CD8-positive, alpha-beta T cell (primary cell): ENCODE measurements at regions of chr15 and their contacts with region 1.

Region 1: GRCh38 chr15:50424066-50424890 is at the start of gene USP8:
- DNase-seq: peak; percentile 86 to 97 (median 92)
- ATAC-seq: peak; percentile 96
- H3K4me3 ChIP-seq: peak within 1 kb of the TSS; percentile 84 to 95
- H3K4me3 Mint-ChIP-seq: peak within 1 kb of the TSS; percentile 98
- H3K27ac ChIP-seq: peak within 1 kb of the TSS; percentile 91 to 96
- H3K27ac Mint-ChIP-seq: peak within 1 kb of the TSS; percentile 99
- H3K4me1 ChIP-seq: peaks cover 27% of the 10 kb centered on the region
- H3K4me1 Mint-ChIP-seq: peaks cover 42% of the 10 kb centered on the region
- H3K27me3 ChIP-seq: no peaks in the 10 kb centered on the region
- H3K27me3 Mint-ChIP-seq: no peaks in the 10 kb centered on the region
- CTCF ChIP-seq: no peak
- total RNA-seq, gene USP8: 59.5 to 61.5 TPM

Region 2: DNA sequence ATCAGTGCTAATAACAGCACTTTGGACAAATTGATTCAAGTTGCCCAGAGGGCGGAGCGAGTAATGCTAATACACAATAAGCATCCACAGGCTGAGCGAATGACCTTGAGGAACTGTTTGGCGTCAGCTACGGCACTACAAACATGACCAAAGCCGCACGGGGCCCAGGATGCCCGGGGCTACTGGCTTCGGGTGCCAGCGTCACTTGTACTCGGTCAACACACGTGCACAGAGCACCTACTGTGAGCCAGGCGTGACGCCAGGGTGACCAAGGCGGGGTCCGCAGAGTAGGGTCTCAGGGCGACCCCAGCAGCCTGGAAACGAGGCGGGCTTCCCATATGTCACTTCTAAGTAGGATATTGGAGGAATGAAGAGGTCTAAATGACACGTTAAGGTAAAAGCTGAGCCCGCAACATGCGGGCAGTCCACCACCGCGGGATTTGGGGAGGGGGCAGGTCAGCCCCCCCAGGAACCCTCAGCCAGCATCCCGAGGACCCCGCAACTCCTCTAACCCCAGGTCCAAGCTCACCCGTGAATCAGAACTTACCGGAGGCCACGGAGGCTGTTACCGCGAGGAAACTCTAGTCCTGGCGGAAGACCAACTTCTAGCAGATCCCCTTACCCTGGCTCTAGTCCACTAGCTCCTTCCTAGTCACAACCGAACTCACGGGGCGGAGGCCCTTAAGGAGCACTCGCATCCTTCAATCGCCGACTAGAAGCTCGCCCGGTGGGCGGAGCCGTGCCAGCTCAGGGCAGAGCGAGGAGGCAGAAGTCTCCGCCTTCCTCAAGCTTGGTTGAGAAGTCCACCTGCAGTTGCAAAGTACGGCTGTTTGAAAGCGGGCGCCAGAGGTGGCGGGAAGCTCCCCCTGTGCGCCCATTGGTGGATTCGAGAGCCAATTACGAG is 1613.6 kb before region 1 on chr15 and contains the start of gene CEP152:
- CTCF ChIA-PET with region 1: no interaction called
- POLR2A ChIA-PET with region 1: no interaction called
- intact Hi-C with region 1: loop called in 1 of 2 experiments (anchors 5 kb)
- DNase-seq: peak; percentile 96 to 100 (median 98)
- ATAC-seq: peak; percentile 94
- H3K4me3 ChIP-seq: peak within 1 kb of the TSS; percentile 83 to 95
- H3K4me3 Mint-ChIP-seq: peak within 1 kb of the TSS; percentile 90
- H3K27ac ChIP-seq: peak within 1 kb of the TSS; percentile 64 to 73
- H3K27ac Mint-ChIP-seq: peak within 1 kb of the TSS; percentile 71
- H3K4me1 ChIP-seq: peaks cover 13% of the 10 kb centered on the region
- H3K4me1 Mint-ChIP-seq: peaks cover 33% of the 10 kb centered on the region
- H3K27me3 ChIP-seq: no peaks in the 10 kb centered on the region
- H3K27me3 Mint-ChIP-seq: peaks cover 6% of the 10 kb centered on the region
- CTCF ChIP-seq: no peak
- total RNA-seq, gene CEP152: 3.9 to 5.1 TPM

Region 3: DNA sequence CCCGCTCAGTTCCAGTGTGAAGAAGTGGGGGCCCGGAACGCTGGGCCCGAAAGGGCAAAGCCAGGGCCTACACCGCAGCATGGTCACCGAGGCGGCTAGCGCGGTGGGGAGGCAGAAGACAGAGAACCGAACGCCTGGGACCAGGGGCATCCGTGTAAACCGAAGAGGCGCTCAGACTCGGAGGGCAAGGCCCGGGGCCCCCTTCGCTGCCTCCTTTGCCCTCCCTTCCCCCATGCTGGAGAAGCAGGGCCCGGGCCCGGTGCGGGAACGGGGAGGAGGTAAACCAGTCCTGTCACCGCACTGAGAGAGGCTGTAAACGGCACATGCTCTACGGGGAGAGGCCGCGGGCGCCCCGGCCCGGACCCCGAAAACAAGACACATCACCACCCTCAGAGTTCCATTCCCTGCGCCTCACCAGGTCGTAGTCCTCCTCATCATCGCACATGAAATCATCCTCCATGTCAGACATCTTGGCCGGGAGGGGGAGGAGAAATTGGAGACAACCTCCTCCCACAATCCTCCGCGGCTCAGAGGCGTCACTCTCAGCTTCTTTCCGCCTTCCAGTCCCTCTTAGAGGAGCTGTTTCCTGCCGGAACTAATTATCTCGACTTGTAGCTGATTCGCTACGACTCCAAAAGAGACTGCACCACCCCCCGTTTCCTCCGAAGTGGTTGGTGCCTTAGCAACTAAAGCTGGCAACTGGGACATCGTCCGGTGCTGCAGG is 1269.0 kb before region 1 on chr15 and contains the start of gene COPS2:
- CTCF ChIA-PET with region 1: no interaction called
- POLR2A ChIA-PET with region 1: no interaction called
- intact Hi-C with region 1: loop called (anchors 2 to 5 kb)
- DNase-seq: peak; percentile 84 to 98 (median 93)
- ATAC-seq: peak; percentile 94
- H3K4me3 ChIP-seq: peak within 1 kb of the TSS; percentile 83 to 90
- H3K4me3 Mint-ChIP-seq: peak within 1 kb of the TSS; percentile 99
- H3K27ac ChIP-seq: peak within 1 kb of the TSS; percentile 83 to 92
- H3K27ac Mint-ChIP-seq: peak within 1 kb of the TSS; percentile 98
- H3K4me1 ChIP-seq: peaks cover 36% of the 10 kb centered on the region
- H3K4me1 Mint-ChIP-seq: peaks cover 55% of the 10 kb centered on the region
- H3K27me3 ChIP-seq: no peaks in the 10 kb centered on the region
- H3K27me3 Mint-ChIP-seq: no peaks in the 10 kb centered on the region
- CTCF ChIP-seq: no peak
- total RNA-seq, gene COPS2: 147 to 159 TPM

Region 4: GRCh38 chr15:49163678-49164077 is 1260.6 kb before region 1 on chr15:
- CTCF ChIA-PET with region 1: no interaction called
- POLR2A ChIA-PET with region 1: no interaction called
- intact Hi-C with region 1: loop called in 1 of 2 experiments (anchors 5 kb)
- DNase-seq: no peak
- ATAC-seq: no peak
- H3K4me3 ChIP-seq: no peak overlapping the region
- H3K4me3 Mint-ChIP-seq: no peak overlapping the region
- H3K27ac ChIP-seq: no peak overlapping the region
- H3K27ac Mint-ChIP-seq: no peak overlapping the region
- H3K4me1 ChIP-seq: no peaks in the 10 kb centered on the region
- H3K4me1 Mint-ChIP-seq: no peaks in the 10 kb centered on the region
- H3K27me3 ChIP-seq: no peaks in the 10 kb centered on the region
- H3K27me3 Mint-ChIP-seq: no peaks in the 10 kb centered on the region
- CTCF ChIP-seq: no peak

Region 5: DNA sequence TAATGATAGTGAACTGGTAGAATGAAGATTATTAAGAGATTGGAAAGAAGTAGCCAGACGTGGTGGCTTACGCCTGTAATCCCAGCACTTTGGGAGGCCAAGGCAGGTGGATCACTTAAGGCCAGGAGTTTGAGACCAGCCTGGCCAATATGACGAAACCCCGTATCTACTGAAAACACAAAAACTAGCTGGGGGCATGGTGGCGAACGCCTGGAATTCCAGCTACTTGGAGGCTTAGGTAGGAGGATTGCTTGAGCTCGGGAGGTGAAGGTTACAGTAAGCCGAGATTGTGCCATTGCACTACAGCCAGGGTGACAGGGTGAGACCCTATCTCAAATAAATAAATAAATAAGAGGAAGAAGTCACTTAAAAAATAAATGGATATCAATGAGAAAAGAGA is 14.0 kb after region 1 on chr15:
- CTCF ChIA-PET with region 1: no interaction called
- POLR2A ChIA-PET with region 1: no interaction called
- intact Hi-C with region 1: no loop called
- DNase-seq: no peak
- ATAC-seq: no peak
- H3K4me3 ChIP-seq: no peak overlapping the region
- H3K4me3 Mint-ChIP-seq: no peak overlapping the region
- H3K27ac ChIP-seq: no peak overlapping the region
- H3K27ac Mint-ChIP-seq: no peak overlapping the region
- H3K4me1 ChIP-seq: peaks cover 13% of the 10 kb centered on the region
- H3K4me1 Mint-ChIP-seq: peaks cover 31% of the 10 kb centered on the region
- H3K27me3 ChIP-seq: no peaks in the 10 kb centered on the region
- H3K27me3 Mint-ChIP-seq: no peaks in the 10 kb centered on the region
- CTCF ChIP-seq: no peak

Region 6: DNA sequence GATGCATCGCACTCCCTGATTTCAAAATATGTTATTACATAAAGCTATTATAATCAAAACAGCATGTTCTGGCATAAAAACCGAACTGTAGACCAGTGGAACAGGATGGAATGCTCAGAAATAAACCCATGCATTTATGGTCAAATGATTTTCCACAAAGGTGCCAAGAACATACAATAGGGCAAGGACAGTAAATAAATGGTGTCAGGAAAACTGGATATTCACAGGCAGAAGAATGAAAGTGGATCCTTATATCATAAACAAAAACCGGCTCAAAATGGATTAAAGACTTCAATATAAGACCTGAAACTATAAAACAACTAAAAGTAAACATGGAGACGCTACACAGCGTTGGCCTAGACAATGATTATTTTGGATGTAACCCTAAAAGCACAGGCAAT is 99.6 kb after region 1 on chr15:
- CTCF ChIA-PET with region 1: no interaction called
- POLR2A ChIA-PET with region 1: no interaction called
- intact Hi-C with region 1: no loop called
- DNase-seq: no peak
- ATAC-seq: no peak
- H3K4me3 ChIP-seq: no peak overlapping the region
- H3K4me3 Mint-ChIP-seq: no peak overlapping the region
- H3K27ac ChIP-seq: no peak overlapping the region
- H3K27ac Mint-ChIP-seq: no peak overlapping the region
- H3K4me1 ChIP-seq: no peaks in the 10 kb centered on the region
- H3K4me1 Mint-ChIP-seq: no peaks in the 10 kb centered on the region
- H3K27me3 ChIP-seq: no peaks in the 10 kb centered on the region
- H3K27me3 Mint-ChIP-seq: no peaks in the 10 kb centered on the region
- CTCF ChIP-seq: no peak